Activated CD4-positive, alpha-beta memory T cell treated with anti-CD3 and anti-CD28 coated beads for 36 hours (primary cell): ENCODE measurements at regions of chr14 and their contacts with region 1.

Region 1: GRCh38 chr14:80954687-80955299 is 628 bp upstream of the TSHR start:
- DNase-seq: peak; percentile 79
- H3K4me3 Mint-ChIP-seq: peak overlapping the region; percentile 73
- H3K27ac Mint-ChIP-seq: no peak overlapping the region
- H3K4me1 Mint-ChIP-seq: peaks cover 32% of the 10 kb centered on the region
- H3K27me3 Mint-ChIP-seq: peaks cover 8% of the 10 kb centered on the region

Region 2: DNA sequence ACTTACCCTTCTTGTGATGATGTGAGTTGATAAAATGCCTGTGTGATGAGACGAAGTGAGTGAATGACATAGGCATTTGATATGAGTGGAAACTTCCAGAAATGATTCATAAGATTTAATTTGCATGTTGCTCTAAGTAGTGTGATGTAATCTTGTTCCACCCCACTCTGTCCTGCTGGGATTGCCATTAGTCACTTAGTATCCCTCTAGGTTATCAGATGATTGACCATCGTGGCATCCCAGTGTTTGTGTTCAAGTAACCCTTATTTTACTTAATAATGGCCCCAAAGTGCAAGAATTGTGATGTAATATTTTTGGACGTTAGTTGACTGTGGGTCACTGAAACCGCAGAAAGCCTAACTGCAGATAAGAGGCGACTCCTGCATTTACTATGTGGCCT is 529.1 kb before region 1 on chr14:
- CTCF ChIA-PET with region 1: no interaction called
- POLR2A ChIA-PET with region 1: no interaction called
- intact Hi-C with region 1: no loop called
- DNase-seq: no peak
- H3K4me3 Mint-ChIP-seq: no peak overlapping the region
- H3K27ac Mint-ChIP-seq: no peak overlapping the region
- H3K4me1 Mint-ChIP-seq: no peaks in the 10 kb centered on the region
- H3K27me3 Mint-ChIP-seq: no peaks in the 10 kb centered on the region

Region 3: DNA sequence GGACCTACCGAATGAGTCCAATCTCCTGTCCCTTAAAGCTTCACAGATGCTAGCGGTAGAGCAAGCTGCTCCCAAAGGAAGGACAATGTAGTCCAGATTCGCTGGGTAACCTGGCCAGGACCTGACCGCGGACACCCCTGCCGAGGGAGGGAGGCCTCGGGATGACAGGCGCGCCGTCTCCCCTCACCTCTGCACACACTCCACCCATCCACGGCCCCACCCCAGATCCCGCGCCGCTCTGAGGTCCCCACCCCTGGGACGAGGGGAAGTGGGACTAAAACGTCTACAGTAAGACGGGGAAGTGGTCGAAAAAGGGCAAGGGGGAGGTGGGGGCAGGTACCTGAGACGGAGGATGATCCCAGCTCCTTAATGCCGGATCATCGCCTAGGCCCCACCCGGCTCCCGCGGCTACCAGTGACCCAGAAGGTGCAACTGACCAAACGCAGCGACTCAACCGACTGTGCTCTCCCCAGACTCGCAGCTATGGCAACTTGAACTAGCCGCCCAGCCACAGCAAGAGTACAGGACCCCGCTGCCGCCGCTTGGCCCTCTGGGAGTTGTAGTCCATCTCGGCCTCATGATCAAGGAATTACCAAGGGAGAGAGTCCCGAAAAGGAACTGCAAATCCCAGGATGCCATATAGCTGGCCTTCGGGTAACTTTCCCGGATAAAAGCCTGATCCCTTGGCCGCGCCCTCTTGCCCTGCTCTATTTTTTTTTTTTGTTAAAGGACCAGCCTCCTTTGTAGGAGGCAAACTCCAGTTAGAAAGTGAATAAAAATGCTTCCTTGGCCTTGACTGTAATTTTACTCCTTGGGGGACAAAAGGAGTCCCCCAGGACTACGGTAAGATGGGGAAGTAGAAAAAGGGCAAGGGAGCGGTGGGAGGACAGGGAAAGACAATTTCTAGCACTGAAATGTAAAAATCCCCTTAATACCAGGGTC is 13.3 kb before region 1 on chr14 and contains the start of gene CEP128:
- CTCF ChIA-PET with region 1: interaction called, 9 read pairs
- POLR2A ChIA-PET with region 1: interaction called, 3 read pairs
- intact Hi-C with region 1: loop called (anchors 1 kb)
- DNase-seq: peak; percentile 92
- H3K4me3 Mint-ChIP-seq: peak within 1 kb of the TSS; percentile 88
- H3K27ac Mint-ChIP-seq: peak within 1 kb of the TSS; percentile 93
- H3K4me1 Mint-ChIP-seq: peaks cover 37% of the 10 kb centered on the region
- H3K27me3 Mint-ChIP-seq: no peaks in the 10 kb centered on the region
- total RNA-seq, gene CEP128: 19.4 to 22.8 TPM

Region 4: DNA sequence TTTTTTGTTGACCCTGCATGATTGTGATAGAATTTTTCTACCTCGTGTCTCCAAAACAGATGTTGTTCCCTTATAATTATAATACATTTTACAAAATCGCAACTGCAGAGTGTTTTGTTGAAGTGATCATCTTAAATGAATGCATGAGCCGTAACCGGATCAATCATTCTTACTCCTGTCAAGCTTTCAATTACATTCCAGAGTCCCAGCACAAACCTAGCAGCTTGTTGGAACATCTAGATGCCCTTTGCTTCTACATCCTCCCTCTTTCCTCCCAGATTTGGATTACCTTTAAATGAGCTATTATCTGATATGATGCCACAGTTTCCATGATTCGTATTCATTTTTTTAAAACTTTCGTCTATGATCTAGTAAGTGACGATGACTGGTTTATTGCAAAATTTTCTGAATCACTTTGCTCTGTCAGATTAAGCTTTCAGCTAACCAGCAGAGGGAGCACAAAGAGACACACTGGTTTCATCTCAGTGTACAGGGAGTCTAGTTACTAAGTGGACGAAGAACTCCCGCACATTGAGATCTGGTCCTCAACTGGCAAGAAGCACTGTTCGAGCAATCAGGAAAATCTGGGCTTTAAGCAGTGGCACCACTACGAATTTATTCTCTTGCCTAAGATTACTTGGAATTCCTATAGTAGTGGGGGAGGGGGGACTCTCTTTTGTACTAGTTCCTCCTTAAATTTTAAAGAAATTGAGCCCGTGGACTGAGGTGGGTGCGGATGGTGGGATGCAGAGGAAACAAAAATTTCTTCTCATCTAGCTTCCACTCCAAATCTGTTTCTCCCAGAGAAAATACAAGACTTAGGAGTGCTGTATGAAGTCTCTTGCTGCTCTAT is 41.5 kb after region 1 on chr14:
- CTCF ChIA-PET with region 1: interaction called, 12 read pairs
- POLR2A ChIA-PET with region 1: no interaction called
- intact Hi-C with region 1: no loop called
- DNase-seq: peak; percentile 20
- H3K4me3 Mint-ChIP-seq: no peak overlapping the region
- H3K27ac Mint-ChIP-seq: no peak overlapping the region
- H3K4me1 Mint-ChIP-seq: peaks cover 7% of the 10 kb centered on the region
- H3K27me3 Mint-ChIP-seq: peaks cover 15% of the 10 kb centered on the region

Region 5: GRCh38 chr14:81153187-81153586 is 198.4 kb after region 1 on chr14:
- CTCF ChIA-PET with region 1: no interaction called
- POLR2A ChIA-PET with region 1: no interaction called
- intact Hi-C with region 1: loop called (anchors 1 kb)
- DNase-seq: no peak
- H3K4me3 Mint-ChIP-seq: no peak overlapping the region
- H3K27ac Mint-ChIP-seq: no peak overlapping the region
- H3K4me1 Mint-ChIP-seq: peaks cover 11% of the 10 kb centered on the region
- H3K27me3 Mint-ChIP-seq: peaks cover 2% of the 10 kb centered on the region

Region 6: GRCh38 chr14:81170104-81170828 is 215.5 kb after region 1 on chr14:
- CTCF ChIA-PET with region 1: interaction called, 7 read pairs
- POLR2A ChIA-PET with region 1: no interaction called
- intact Hi-C with region 1: loop called (anchors 1 kb)
- DNase-seq: peak; percentile 92
- H3K4me3 Mint-ChIP-seq: peak overlapping the region; percentile 85
- H3K27ac Mint-ChIP-seq: peak overlapping the region; percentile 93
- H3K4me1 Mint-ChIP-seq: peaks cover 17% of the 10 kb centered on the region
- H3K27me3 Mint-ChIP-seq: no peaks in the 10 kb centered on the region